GM12878 (cell line): ENCODE measurements at regions of chr6 and their contacts with region 1.

Region 1: DNA sequence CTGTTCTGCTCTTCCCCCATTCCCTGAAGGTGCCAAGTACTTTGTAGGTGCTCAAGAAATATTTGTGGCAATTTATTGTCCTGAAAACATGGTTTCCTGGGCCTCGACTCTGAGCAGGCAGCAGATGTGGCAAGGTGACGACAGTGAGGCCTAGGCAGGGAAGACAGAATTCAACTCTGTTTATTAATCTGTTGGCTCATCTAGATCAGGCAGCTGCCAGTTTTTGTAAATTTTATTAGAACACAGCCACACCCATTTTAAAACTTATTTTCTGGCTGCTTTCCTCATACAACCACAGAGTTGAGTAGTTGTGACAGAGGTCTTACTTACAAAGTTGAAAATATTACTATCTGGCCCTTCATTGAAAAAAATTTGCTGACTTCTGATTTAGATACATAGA is 24.5 kb downstream of the MAPK14 start:
- DNase-seq: no peak
- ATAC-seq: no peak
- H3K4me3 ChIP-seq: no peak overlapping the region
- H3K27ac ChIP-seq: no peak overlapping the region
- H3K4me1 ChIP-seq: peaks cover 3% of the 10 kb centered on the region; the same call in 1 of the 2 replicates
- H3K27me3 ChIP-seq: no peaks in the 10 kb centered on the region
- CTCF ChIP-seq: no peak
- EP300 ChIP-seq: no peak
- POLR2A ChIP-seq: no peak
- RAD21 ChIP-seq: no peak

Region 2: DNA sequence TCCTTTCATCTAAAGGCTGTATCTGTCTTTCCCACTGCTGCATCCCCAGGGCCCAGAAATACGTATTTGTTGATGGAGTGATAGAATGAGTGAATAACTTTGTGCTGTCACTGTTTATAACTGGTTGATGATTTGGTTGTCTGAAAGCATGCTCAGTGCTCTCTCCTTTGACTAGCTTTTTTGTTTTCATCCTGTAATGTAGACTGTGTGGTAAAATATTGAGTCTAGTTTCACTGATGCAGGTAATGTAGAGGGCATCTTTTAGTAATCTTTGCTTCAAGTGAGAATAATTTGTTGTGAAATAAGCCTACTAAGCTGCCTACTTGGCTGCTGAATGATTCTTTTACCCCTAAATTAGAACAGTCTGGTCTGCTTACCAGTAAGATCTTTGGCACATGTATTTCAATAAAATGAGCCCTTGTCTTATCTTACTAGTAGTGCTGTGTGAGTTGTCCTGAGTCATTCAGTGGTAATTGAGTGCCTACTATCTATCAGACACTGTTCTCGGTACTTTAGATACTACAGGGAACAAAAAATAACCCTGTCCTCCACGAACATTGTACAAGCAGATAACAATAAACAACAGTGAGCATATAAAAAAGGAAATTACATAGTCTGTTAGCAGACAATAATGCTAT is 15.4 kb after region 1 on chr6:
- CTCF ChIA-PET with region 1: interaction called, 8 read pairs
- POLR2A ChIA-PET with region 1: interaction called, 3 read pairs
- RAD21 ChIA-PET with region 1: no interaction called
- SMC1A ChIA-PET with region 1: interaction called, 15 read pairs
- in situ Hi-C with region 1: no loop called
- intact Hi-C with region 1: no loop called
- DNase-seq: no peak
- ATAC-seq: peak; percentile 26; the same call in 2 of the 3 replicates
- H3K4me3 ChIP-seq: no peak overlapping the region
- H3K27ac ChIP-seq: no peak overlapping the region
- H3K4me1 ChIP-seq: peaks cover 3% of the 10 kb centered on the region; the same call in 1 of the 2 replicates
- H3K27me3 ChIP-seq: no peaks in the 10 kb centered on the region
- CTCF ChIP-seq: no peak
- EP300 ChIP-seq: no peak
- POLR2A ChIP-seq: no peak
- RAD21 ChIP-seq: no peak

Region 3: DNA sequence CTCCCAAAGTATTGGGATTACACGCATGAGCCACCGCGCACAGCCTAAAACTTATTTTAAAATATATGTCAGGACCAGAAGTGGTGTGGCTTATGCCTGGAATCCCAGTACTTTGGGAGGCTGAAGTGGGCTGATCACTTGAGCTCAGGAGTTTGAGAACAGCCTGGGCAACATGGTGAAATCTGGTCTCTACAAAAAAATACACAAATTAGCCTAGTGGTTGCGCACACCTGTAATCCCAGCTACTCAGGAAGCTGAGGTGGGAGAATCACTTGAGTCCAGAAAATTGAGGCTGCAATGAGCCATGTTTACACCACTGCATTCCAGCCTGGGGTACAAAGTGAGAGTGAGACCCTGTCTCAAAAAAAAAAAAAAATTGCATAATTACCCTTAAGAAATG is 376.8 kb after region 1 on chr6:
- CTCF ChIA-PET with region 1: no interaction called
- POLR2A ChIA-PET with region 1: no interaction called
- RAD21 ChIA-PET with region 1: no interaction called
- SMC1A ChIA-PET with region 1: no interaction called
- in situ Hi-C with region 1: no loop called
- intact Hi-C with region 1: no loop called
- DNase-seq: no peak
- ATAC-seq: no peak
- H3K4me3 ChIP-seq: no peak overlapping the region
- H3K27ac ChIP-seq: no peak overlapping the region
- H3K4me1 ChIP-seq: peaks cover 16% of the 10 kb centered on the region
- H3K27me3 ChIP-seq: no peaks in the 10 kb centered on the region
- CTCF ChIP-seq: no peak
- EP300 ChIP-seq: no peak
- POLR2A ChIP-seq: no peak
- RAD21 ChIP-seq: no peak